Psoas muscle (tissue), 8 donors: ENCODE measurements at regions of chr4 and their contacts with region 1.

Region 1: DNA sequence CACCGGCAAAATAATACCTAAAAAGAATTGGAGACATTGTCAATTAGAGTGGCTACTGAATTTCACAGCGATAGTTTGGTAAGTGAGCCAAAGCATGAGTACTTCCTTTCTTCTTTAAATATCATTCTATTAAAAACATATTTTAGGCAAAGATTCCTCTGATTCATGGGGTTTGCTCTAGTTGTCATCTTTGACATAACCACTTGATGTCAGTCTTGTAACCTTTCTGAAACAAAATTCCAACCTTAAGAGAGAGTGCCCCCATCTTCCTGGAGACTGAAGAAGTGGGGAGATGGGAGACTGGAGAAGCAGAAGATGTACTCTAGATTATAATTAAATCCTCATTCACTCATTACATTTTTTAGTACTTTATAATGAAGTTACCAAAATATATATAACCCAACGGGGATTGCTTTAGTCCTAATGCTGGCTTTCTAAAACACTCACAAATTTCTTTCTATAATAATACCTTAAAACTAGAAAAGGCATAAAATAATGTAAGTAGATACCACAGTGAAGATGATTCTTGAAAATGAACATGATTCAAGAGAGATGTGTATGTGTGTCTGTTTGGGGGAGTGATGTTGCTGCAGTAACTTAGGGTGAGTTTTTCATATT is 96.4 kb downstream of the EMCN start:
- DNase-seq: no peak
- ATAC-seq: peak; percentile 64 to 93 (median 80)
- H3K4me3 ChIP-seq: peak overlapping the region; percentile 60
- H3K27ac ChIP-seq: peak overlapping the region; percentile 74
- H3K4me1 ChIP-seq: peaks cover 20% of the 10 kb centered on the region
- H3K27me3 ChIP-seq: no peaks in the 10 kb centered on the region
- CTCF ChIP-seq: peak; percentile 79

Region 2: DNA sequence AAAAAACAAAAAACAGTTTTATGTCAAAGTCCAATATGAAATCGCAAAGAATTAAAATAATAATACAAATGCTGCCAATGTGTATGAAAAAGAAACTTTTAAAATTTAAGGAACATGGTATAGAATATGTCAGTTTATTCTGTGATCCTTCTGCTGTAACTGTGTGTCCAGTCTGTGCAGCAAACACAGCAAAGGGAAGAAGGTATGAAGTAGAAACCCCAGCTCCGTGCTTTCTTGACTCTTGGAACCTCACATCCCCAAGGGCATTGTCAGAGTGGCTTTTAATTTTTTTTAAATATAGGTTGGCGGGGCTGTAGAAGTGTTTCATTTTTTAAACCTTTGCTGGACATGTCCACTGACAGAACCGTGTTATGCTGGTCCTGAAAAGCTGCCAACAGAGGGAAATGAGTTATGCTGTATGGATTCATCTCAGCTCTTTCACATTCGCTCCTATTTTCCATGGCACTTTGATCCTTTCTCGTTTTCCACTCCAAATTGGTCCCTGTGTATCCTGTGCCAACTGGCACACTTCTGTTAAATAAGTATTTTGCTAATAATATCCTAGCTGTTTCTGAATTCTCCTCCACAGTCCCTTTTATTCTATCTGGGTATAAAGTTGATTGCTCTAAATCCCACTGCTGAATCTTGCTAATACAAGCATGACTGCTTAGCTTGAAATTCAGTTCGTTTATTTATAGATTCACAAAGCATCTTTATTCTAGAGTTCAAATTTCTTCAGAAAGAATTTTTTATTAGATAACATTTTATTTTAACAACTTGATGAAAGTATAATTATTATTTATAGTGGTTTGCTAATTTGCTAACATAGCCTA is 104.2 kb before region 1 on chr4:
- intact Hi-C with region 1: no loop called
- DNase-seq: no peak
- ATAC-seq: peak in 3 of 4 donors; percentile 23 to 56 (median 41)
- H3K4me3 ChIP-seq: peak overlapping the region; percentile 46
- H3K27ac ChIP-seq: peak overlapping the region; percentile 73
- H3K4me1 ChIP-seq: peaks cover 40% of the 10 kb centered on the region
- H3K27me3 ChIP-seq: no peaks in the 10 kb centered on the region
- CTCF ChIP-seq: no peak

Region 3: GRCh38 chr4:101169044-101170014 is 747.9 kb after region 1 on chr4:
- intact Hi-C with region 1: loop called in 1 of 2 experiments (anchors 10 kb)
- DNase-seq: peak; percentile 24 to 51
- ATAC-seq: peak; percentile 91 to 99 (median 96)
- H3K4me3 ChIP-seq: no peak overlapping the region
- H3K27ac ChIP-seq: no peak overlapping the region
- H3K4me1 ChIP-seq: peaks cover 6% of the 10 kb centered on the region
- H3K27me3 ChIP-seq: no peaks in the 10 kb centered on the region
- CTCF ChIP-seq: peak; percentile 76

Region 4: GRCh38 chr4:101730291-101731117 is 1309.0 kb after region 1 on chr4:
- intact Hi-C with region 1: loop called in 1 of 2 experiments (anchors 10 kb)
- DNase-seq: peak; percentile 47 to 71
- ATAC-seq: peak; percentile 82 to 97 (median 94)
- H3K4me3 ChIP-seq: no peak overlapping the region
- H3K27ac ChIP-seq: no peak overlapping the region
- H3K4me1 ChIP-seq: no peaks in the 10 kb centered on the region
- H3K27me3 ChIP-seq: no peaks in the 10 kb centered on the region
- CTCF ChIP-seq: peak; percentile 81